Posterior vena cava (tissue), 2 donors: ENCODE measurements at regions of chr10 and their contacts with region 1.

Region 1: GRCh38 chr10:91551856-91552255 is 81.0 kb downstream of the PPP1R3C start:
- DNase-seq: no peak

Region 2: GRCh38 chr10:91493313-91493712 is 58.5 kb before region 1 on chr10:
- intact Hi-C with region 1: loop called in 1 of 2 experiments (anchors 5 kb)
- DNase-seq: no peak